ENCODE measurements at regions of chr2 and their contacts with region 1.

Region 1: DNA sequence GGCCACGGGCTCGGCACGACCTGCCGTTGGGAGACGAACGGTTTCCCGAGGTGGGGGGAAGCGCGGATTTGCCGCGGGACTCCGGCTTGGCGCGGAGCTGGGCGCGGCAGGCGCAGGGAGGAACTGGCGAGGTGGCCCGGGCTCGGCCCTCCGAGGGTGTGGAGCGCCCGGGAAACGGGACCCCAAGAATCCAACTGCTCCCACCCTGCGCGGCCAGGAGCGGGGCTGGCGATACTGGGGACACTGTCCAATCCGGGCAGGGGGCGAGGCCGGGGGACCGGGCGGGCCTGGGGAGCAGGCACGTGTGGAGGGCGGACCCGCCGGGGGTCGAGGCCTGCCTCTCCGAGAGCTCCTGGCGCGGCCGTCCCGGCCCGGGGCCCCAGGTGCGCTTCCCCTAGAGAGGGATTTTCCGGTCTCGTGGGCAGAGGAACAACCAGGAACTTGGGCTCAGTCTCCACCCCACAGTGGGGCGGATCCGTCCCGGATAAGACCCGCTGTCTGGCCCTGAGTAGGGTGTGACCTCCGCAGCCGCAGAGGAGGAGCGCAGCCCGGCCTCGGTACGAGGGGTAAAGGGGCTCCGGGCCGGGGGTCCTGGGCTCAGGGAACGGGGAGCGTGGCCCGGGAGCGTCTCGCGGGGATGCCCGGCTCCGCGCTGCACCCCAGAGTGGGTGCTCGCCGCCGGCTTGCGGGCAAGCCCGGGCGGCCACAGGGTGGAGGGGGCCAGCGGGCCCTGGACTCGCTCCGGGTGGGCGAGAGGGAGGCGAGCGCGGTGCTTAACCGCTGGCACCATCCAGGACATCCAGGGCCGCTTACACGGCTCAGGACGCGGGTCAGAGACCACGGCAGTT is at the start of gene ANXA4:
- H3K4me3 Mint-ChIP-seq: peak within 1 kb of the TSS; percentile 98
- H3K27ac Mint-ChIP-seq: peak within 1 kb of the TSS; percentile 97
- H3K4me1 Mint-ChIP-seq: peaks cover 49% of the 10 kb centered on the region
- H3K27me3 Mint-ChIP-seq: no peaks in the 10 kb centered on the region

Region 2: DNA sequence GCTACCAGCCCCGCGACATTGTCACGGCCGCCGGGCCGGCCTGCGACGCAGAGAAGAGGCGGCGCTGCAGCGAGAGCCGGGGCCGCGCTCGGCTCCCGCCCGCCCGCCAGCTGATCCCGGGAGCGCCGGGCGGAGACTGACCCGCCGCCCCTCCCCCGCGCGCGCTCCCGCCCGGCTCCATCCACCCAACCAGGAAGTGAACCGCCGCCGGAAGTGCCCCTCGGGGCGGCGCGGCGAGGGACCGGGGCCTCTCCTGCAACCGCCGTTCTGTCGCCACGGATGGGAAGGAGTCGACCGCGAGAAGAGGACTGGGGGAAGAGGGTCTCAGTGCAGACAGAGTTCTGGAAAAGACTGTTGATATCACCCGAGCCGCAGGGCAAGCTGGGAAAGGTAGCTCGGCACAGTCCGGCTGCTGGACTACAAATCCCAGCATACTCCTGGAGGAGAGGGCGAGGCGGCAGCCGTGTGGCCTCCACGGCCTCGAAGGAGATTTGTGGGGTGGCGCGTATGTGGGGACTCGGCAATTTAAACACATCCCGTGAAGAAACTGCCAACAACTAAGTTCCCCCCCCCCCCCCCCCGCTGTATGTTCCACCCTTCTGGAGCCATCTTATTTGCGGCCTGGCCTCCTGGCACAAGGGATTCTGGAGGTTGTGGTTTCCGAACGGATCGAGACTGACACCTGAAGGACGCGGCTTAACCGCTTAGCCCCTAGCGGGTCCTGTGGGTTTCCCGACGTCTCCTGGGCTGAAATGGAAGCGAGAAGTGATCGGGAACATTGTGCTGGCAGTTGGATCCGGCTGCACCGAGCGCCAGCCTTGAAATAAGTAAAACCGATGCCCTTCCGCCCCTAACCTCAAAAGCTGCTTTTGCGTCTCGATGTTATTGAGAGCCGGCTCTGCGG is 98.0 kb before region 1 on chr2 and contains the start of gene AAK1:
- intact Hi-C with region 1: no loop called
- H3K4me3 Mint-ChIP-seq: peak within 1 kb of the TSS; percentile 93
- H3K27ac Mint-ChIP-seq: peak within 1 kb of the TSS; percentile 99
- H3K4me1 Mint-ChIP-seq: peaks cover 54% of the 10 kb centered on the region
- H3K27me3 Mint-ChIP-seq: no peaks in the 10 kb centered on the region

Region 3: GRCh38 chr2:69779258-69780001 is 37.6 kb after region 1 on chr2:
- intact Hi-C with region 1: loop called (anchors 5 kb)
- H3K4me3 Mint-ChIP-seq: no peak overlapping the region
- H3K27ac Mint-ChIP-seq: no peak overlapping the region
- H3K4me1 Mint-ChIP-seq: peaks cover 44% of the 10 kb centered on the region
- H3K27me3 Mint-ChIP-seq: no peaks in the 10 kb centered on the region

Region 4: GRCh38 chr2:69789772-69790600 is 48.1 kb after region 1 on chr2:
- intact Hi-C with region 1: no loop called
- H3K4me3 Mint-ChIP-seq: no peak overlapping the region
- H3K27ac Mint-ChIP-seq: peak overlapping the region; percentile 66
- H3K4me1 Mint-ChIP-seq: peaks cover 14% of the 10 kb centered on the region
- H3K27me3 Mint-ChIP-seq: no peaks in the 10 kb centered on the region

Region 5: DNA sequence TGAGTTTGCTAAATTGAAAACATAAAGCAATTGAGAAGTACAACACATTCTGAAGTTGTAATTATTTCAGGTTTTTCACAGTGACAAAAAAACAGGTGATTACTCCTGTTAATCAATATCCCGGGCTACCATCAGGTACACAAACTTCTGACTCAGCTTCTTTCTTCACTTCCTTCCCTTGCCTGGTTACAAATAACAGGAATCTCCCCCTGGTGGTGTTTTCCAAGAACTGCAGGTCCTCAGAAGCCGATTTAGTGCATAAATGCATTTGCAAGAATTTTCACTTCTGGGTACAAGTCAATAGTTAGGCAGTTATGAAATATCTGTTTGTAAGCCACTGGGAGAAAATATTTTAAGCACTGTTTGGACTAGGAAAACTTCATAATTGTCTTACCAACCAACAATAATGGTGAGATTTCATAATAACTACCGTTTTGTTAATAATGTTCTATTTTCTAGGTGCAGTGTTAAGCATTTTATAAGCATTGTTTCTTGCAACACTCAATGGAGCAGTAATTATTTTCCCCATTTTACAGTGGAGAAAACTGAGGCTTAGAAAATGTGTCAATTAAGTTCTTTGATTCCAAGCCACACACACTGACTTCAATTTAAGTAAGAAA is 75.2 kb after region 1 on chr2:
- intact Hi-C with region 1: loop called (anchors 5 kb)
- H3K4me3 Mint-ChIP-seq: no peak overlapping the region
- H3K27ac Mint-ChIP-seq: no peak overlapping the region
- H3K4me1 Mint-ChIP-seq: no peaks in the 10 kb centered on the region
- H3K27me3 Mint-ChIP-seq: no peaks in the 10 kb centered on the region

Region 6: DNA sequence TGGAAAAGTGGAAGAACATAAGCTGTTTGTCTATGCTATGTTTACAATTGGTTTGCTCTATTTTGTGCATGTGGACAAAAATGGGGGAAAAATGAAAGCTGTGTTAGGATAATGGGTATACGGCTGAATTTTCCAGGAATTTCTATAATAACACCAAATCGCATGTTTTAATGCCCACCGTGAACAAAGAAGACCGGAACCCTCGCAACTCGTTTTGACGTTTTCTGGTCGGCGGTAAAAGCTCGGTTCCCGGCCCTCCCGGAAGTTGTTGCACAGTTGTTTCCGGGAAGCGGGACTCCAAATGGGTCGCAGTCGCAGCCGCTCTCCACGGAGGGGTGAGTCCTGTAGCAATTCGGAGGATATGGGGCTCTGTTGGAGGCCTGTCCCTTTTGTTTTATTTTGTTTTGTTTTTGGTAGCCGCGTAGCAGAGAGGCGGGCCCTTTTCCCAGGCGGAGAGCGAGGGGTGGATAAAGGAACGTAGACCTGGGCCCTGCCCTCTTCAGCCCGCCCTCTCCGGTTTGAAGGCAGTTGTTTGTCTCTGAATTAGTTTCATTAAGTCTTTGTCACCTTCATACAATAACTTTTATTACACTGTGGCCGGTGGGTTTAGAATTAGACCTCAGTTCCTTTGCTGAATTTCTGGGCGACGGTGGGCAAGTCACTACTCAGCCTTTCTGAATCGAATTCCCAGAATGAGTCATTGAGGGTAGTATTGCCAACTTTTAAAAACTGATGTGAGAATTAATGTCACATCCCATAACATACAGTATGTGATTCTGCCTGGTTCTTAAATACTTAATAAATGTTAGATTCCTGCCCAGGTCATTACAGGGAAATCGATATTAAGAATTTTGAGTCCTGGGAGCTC is 152.1 kb after region 1 on chr2 and contains the start of gene SNRNP27:
- intact Hi-C with region 1: no loop called
- H3K4me3 Mint-ChIP-seq: peak within 1 kb of the TSS; percentile 100
- H3K27ac Mint-ChIP-seq: peak within 1 kb of the TSS; percentile 96
- H3K4me1 Mint-ChIP-seq: peaks cover 24% of the 10 kb centered on the region
- H3K27me3 Mint-ChIP-seq: no peaks in the 10 kb centered on the region